H1 (cell line): ENCODE measurements at regions of chr14 and their contacts with region 1.

Region 1: DNA sequence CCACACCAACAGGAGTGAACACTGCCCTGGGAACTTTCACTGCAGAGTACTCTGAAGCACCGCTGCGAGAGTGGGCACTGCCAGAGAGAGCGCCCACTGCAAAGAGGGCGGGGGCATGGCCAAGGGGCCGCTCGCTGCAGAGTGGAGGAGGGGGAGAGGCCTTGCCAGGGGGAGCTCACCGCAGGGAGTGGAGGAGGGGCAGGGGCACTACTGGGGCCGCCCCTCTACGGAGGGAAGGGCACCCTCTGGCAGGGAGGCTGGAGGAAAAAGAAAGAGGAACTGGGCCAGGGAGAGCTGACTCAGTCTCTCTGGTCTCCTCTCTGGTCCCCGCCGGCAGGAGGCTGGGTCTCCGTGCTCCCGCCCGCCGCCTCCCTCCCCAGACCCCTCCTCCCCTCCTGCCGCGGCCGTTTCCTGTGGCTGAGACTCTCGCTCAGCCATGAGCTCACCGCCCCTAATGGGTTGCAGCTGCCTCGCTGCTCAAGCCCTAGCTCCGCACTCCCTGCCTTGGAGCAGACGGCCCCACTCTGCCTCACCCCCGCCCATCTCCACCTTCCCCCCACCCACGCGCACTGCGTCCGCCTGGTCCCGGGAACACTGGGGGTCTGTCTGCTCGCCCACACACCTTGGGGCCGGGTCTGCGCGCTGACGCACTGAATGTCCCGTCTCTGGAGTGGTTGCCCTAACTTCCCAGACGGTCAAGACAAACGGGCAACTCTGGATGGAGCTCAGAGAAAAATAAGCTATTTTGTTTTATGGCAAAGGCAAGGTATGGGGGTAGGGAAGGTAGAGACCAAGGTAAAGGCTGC is 1.3 kb downstream of the ARHGEF40 start:
- DNase-seq: no peak
- H3K4me3 ChIP-seq: peak overlapping the region; percentile 52 to 98 (median 82)
- H3K27ac ChIP-seq: peak overlapping the region; percentile 72
- H3K4me1 ChIP-seq: peaks cover 3 to 14% (median 8%) of the 10 kb centered on the region in 4 experiments
- H3K27me3 ChIP-seq: peaks cover 0 to 4% (median 0%) of the 10 kb centered on the region in 4 experiments; a peak in 3 of 7 replicates
- CTCF ChIP-seq: no peak
- EP300 ChIP-seq: no peak
- POLR2A ChIP-seq: peak in 1 of 2 experiments; percentile 73; a peak in 1 of 3 replicates
- RAD21 ChIP-seq: no peak

Region 2: GRCh38 chr14:21024585-21025370 is 46.6 kb before region 1 on chr14 and contains the start of gene NDRG2:
- CTCF ChIA-PET with region 1: interaction called, 18 read pairs
- POLR2A ChIA-PET with region 1: interaction called, 9 read pairs
- DNase-seq: peak in 1 of 2 experiments; percentile 91
- H3K4me3 ChIP-seq: peak within 1 kb of the TSS; percentile 64 to 92 (median 70)
- H3K27ac ChIP-seq: peak within 1 kb of the TSS; percentile 71; the same call in 1 of the 2 replicates
- H3K4me1 ChIP-seq: peaks cover 4 to 22% (median 14%) of the 10 kb centered on the region in 4 experiments; a peak in 6 of 7 replicates
- H3K27me3 ChIP-seq: peaks cover 2 to 25% (median 22%) of the 10 kb centered on the region in 4 experiments; a peak in 6 of 7 replicates
- CTCF ChIP-seq: no peak
- EP300 ChIP-seq: no peak
- POLR2A ChIP-seq: no peak
- RAD21 ChIP-seq: no peak; a peak in 1 of 4 replicates
- total RNA-seq, gene NDRG2: 27.2 and 29.9 TPM in 2 replicates

Region 3: GRCh38 chr14:21039585-21040369 is 31.7 kb before region 1 on chr14:
- CTCF ChIA-PET with region 1: interaction called, 12 read pairs
- POLR2A ChIA-PET with region 1: interaction called, 9 read pairs
- DNase-seq: peak in 1 of 2 experiments; percentile 53
- H3K4me3 ChIP-seq: no peak overlapping the region
- H3K27ac ChIP-seq: no peak overlapping the region
- H3K4me1 ChIP-seq: peaks cover 8 to 11% (median 10%) of the 10 kb centered on the region in 4 experiments; a peak in 6 of 7 replicates
- H3K27me3 ChIP-seq: peaks cover 0 to 3% (median 0%) of the 10 kb centered on the region in 4 experiments; a peak in 1 of 7 replicates
- CTCF ChIP-seq: peak in 2 of 3 experiments; percentile 68 to 83; a peak in 3 of 4 replicates
- EP300 ChIP-seq: no peak
- POLR2A ChIP-seq: no peak
- RAD21 ChIP-seq: peak; percentile 91

Region 4: DNA sequence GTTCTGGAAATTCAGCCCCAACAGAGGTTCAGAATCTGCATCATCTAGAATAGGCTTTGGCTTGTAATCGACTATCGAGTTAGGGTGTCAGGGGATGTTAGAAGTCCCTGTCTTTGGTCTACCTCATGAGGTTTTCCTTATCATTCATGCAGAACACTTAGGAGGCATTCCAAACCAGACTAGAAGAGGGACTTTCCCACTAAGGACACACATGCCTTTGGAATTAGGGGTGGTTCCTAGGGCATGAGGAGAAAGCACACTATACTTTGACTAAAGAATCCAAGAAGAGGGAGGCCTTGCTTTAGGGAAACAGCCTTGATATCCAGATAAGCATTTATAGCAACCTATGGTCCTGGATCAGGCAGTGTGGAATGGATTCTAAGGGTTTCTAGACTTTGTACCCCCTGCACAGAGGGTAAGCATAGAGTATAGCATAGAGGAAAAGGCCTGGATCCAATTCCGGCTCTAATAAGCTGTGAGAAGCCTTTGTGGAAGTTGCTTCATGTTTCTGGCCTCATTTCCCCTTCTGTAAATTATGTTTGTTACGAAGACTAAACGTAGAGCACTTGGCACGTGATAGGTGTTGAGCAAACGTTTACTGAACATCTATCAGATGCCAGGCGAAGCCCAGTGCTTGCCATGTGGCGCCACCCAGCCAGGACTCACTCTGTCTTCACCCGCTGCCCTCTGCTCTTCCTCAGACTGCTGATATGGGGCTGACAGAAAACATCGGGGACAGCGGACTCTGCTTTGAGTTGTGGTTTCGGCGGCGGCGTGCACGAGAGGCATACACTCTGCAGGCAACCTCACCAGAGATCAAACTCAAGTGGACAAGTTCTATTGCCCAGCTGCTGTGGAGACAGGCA is 13.8 kb after region 1 on chr14:
- CTCF ChIA-PET with region 1: interaction called, 66 read pairs
- POLR2A ChIA-PET with region 1: interaction called, 245 read pairs
- DNase-seq: no peak
- H3K4me3 ChIP-seq: no peak overlapping the region
- H3K27ac ChIP-seq: no peak overlapping the region
- H3K4me1 ChIP-seq: peaks cover 0 to 5% (median 0%) of the 10 kb centered on the region in 4 experiments; a peak in 2 of 7 replicates
- H3K27me3 ChIP-seq: no peaks in the 10 kb centered on the region
- CTCF ChIP-seq: no peak
- EP300 ChIP-seq: no peak
- POLR2A ChIP-seq: 0 out of 3 replicates have a peak, but pooled peaks of 1 of the 2 experiments have one; percentile 35
- RAD21 ChIP-seq: no peak

Region 5: GRCh38 chr14:21098076-21098891 is 26.9 kb after region 1 on chr14 and contains the start of gene ZNF219:
- CTCF ChIA-PET with region 1: interaction called, 110 read pairs
- POLR2A ChIA-PET with region 1: interaction called, 148 read pairs
- DNase-seq: peak; percentile 54 to 86
- H3K4me3 ChIP-seq: peak within 1 kb of the TSS; percentile 68 to 85 (median 74)
- H3K27ac ChIP-seq: peak within 1 kb of the TSS; percentile 74
- H3K4me1 ChIP-seq: peaks cover 13 to 37% (median 19%) of the 10 kb centered on the region in 4 experiments
- H3K27me3 ChIP-seq: no peaks in the 10 kb centered on the region
- CTCF ChIP-seq: peak in 1 of 3 experiments; percentile 31; a peak in 2 of 4 replicates
- EP300 ChIP-seq: peak; percentile 19 to 42; a peak in 2 of 3 replicates
- POLR2A ChIP-seq: peak; percentile 49 to 55; a peak in 2 of 3 replicates
- RAD21 ChIP-seq: no peak
- total RNA-seq, gene ZNF219: 108 and 113 TPM in 2 replicates

Region 6: GRCh38 chr14:21103710-21104447 is 32.5 kb after region 1 on chr14:
- CTCF ChIA-PET with region 1: interaction called, 102 read pairs
- POLR2A ChIA-PET with region 1: interaction called, 148 read pairs
- DNase-seq: peak; percentile 80 to 96
- H3K4me3 ChIP-seq: peak overlapping the region; percentile 49 to 83 (median 80)
- H3K27ac ChIP-seq: peak overlapping the region; percentile 99
- H3K4me1 ChIP-seq: peaks cover 2 to 25% (median 9%) of the 10 kb centered on the region in 4 experiments; a peak in 5 of 7 replicates
- H3K27me3 ChIP-seq: no peaks in the 10 kb centered on the region
- CTCF ChIP-seq: peak; percentile 70 to 86 (median 75)
- EP300 ChIP-seq: peak in 1 of 2 experiments; percentile 99; a peak in 2 of 3 replicates
- POLR2A ChIP-seq: peak; percentile 88 to 93
- RAD21 ChIP-seq: peak; percentile 9 to 33; a peak in 3 of 4 replicates

Region 7: DNA sequence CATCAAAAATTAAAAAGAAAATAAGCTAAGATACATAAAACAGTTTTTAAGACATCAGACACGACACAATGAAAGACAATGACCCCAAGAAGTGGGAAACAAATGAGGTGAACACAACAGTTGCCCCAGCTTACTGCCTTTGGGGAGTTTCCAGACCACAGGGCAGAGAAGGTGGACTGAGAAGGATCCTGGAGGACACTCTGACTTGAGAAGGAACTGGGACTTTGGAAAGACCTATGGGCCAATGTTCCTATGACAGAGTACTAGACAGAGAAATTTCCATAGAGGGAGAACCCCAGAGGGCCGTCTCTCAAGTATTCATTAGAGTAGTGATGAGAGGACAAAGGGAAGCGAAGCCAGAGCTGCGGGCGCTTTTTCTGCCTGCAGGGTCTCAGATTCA is 90.7 kb after region 1 on chr14:
- CTCF ChIA-PET with region 1: no interaction called
- POLR2A ChIA-PET with region 1: no interaction called
- DNase-seq: no peak
- H3K4me3 ChIP-seq: no peak overlapping the region
- H3K27ac ChIP-seq: no peak overlapping the region
- H3K4me1 ChIP-seq: no peaks in the 10 kb centered on the region
- H3K27me3 ChIP-seq: no peaks in the 10 kb centered on the region
- CTCF ChIP-seq: no peak
- EP300 ChIP-seq: no peak
- POLR2A ChIP-seq: no peak
- RAD21 ChIP-seq: no peak

Region 8: DNA sequence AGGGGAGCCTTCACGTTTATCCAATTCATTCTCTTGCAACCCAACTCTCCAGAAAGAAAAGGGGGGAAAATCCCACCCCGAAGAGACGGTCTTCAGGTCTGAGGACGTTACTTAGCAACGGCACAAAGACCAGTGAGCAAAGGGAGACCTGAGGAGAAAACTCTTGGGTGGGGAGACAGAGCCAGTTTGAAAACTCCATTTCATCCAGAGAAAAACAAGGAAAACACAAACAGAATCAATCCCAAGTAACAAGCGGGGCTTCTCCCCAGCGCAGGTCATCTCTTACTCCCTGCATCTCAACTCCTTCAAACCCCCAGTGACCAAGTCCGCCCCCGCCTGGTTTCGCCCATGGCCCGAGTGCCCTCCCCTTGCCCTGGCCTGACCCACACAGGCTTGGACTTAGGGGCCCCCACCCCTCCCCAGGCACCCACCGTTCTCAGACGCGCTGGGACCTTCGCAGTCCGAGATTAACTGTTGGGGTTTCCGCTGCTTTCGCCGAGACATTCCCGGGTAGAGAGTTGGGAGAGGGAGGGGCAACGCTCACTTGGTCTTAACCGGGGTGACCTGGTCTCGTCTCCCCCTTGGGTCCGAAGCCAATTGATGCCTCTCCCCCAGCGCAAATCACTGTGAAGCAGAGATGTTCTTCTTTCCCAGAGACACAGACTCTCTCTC is 465.1 kb after region 1 on chr14:
- CTCF ChIA-PET with region 1: no interaction called
- POLR2A ChIA-PET with region 1: no interaction called
- DNase-seq: peak in 1 of 2 experiments; percentile 76
- H3K4me3 ChIP-seq: peak overlapping the region; percentile 87 to 96 (median 92)
- H3K27ac ChIP-seq: peak overlapping the region; percentile 91
- H3K4me1 ChIP-seq: peaks cover 0 to 20% (median 15%) of the 10 kb centered on the region in 4 experiments
- H3K27me3 ChIP-seq: no peaks in the 10 kb centered on the region
- CTCF ChIP-seq: no peak
- EP300 ChIP-seq: peak in 1 of 2 experiments; percentile 40; a peak in 1 of 3 replicates
- POLR2A ChIP-seq: peak; percentile 63 to 84
- RAD21 ChIP-seq: no peak